AG04450 (cell line): ENCODE measurements at regions of chr15 and their contacts with region 1.

Region 1: DNA sequence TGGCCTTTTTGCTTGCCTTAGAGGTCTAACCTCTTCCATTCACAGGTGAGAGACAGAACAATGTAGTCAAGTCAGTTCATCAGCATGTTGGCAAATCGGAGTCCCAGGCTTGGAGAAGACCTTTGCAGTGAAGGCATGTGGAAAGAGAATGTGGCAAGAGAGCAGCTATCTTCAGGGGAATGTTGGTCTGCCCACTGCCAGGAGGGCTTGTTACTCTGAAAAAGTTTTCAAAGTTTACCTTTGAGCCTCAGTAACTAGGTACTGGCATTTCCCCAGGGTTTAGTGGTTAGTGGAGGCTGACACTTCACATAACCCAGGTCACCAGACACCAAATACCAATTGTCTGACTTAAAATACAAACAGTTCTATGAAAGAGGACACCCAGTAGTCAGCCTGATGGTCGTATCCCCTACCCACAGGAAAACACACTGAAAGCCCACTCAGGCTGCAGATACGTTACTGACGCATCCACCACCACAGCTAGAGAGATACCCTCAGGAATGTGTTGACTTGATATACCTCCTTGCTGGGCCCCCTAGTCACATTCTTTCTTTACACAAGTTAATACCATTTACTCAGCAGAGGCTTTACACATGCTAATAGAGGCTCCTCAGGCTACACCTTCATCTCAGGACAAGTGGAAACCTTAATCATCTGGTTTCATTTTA is 9.7 kb upstream of the ARID3B start:
- DNase-seq: peak; percentile 89
- H3K4me3 ChIP-seq: peak overlapping the region; percentile 25; the same call in 1 of the 2 replicates
- H3K27ac ChIP-seq: peak overlapping the region; percentile 84
- H3K27me3 ChIP-seq: no peaks in the 10 kb centered on the region
- CTCF ChIP-seq: no peak

Region 2: DNA sequence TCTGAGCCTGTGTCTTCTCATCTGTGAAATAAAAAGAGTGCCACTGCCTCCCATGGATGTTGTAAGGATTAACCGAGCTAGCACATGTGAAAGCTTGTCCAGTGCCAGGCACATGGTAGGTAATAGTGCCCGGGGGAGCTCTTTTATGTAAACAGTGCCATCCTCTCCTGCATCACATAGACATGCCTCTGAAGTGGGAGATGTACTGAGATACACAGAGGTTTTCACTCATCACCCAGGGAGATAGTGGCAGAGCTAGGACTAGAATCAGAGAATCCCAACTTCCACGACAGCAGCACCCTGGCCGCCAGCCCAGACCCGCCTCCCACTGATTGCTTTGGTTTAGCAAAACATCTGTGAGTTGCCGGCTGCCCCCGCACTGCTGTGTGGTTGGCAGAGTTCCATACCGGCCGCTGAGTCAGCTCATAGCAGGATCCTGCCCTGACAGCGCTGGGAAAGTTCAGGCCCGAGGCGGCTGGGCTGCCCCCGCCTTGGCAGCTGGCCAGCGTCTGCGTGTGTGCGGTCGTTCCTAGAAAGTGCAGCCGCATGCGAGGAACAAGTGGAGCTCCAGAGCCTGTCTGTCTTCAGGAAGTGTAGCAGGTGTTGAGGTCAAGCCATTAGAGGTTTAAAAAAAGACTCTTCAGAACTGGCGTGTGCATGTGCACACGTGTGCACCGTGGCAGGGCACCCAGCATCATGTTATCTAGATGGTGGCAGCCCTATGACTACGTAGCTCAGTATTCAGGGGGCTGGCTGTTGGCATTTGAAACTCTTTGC is 14.8 kb after region 1 on chr15:
- CTCF ChIA-PET with region 1: no interaction called
- POLR2A ChIA-PET with region 1: interaction called, 11 read pairs
- DNase-seq: peak; percentile 99
- H3K4me3 ChIP-seq: no peak overlapping the region
- H3K27ac ChIP-seq: no peak overlapping the region
- H3K27me3 ChIP-seq: no peaks in the 10 kb centered on the region
- CTCF ChIP-seq: no peak

Region 3: DNA sequence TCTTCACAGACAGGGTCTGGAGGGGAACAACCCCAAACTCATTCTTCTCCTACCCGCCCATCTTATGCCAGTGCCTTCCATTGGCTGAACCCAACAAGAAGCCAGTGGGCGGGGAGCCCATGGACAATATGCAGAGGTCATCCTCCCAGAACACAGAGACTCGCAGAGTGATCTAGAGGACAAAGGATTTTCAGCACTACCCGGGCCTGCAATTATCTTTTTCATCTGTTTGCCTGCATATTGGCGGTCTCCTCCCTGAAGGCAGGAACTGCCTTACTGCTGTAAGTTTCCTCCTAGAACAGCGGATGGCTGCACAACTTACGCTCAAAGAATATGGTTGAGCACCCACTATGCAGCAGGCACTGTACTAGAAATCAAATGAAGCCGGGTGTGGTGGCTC is 208.6 kb after region 1 on chr15:
- CTCF ChIA-PET with region 1: no interaction called
- POLR2A ChIA-PET with region 1: no interaction called
- DNase-seq: no peak
- H3K4me3 ChIP-seq: no peak overlapping the region
- H3K27ac ChIP-seq: no peak overlapping the region
- H3K27me3 ChIP-seq: peaks cover 16% of the 10 kb centered on the region
- CTCF ChIP-seq: no peak

Region 4: GRCh38 chr15:75061272-75061671 is 530.0 kb after region 1 on chr15:
- CTCF ChIA-PET with region 1: no interaction called
- POLR2A ChIA-PET with region 1: no interaction called
- DNase-seq: no peak
- H3K4me3 ChIP-seq: no peak overlapping the region
- H3K27ac ChIP-seq: no peak overlapping the region
- H3K27me3 ChIP-seq: peaks cover 2% of the 10 kb centered on the region
- CTCF ChIP-seq: no peak